ENCODE measurements at regions of chr1 and their contacts with region 1.

Region 1: GRCh38 chr1:215526553-215527151 is 40.5 kb upstream of the KCTD3 start:
- DNase-seq: peak; percentile 16
- ATAC-seq: peak; percentile 70
- H3K4me3 ChIP-seq: no peak overlapping the region
- H3K27ac ChIP-seq: no peak overlapping the region
- H3K4me1 ChIP-seq: peaks cover 4% of the 10 kb centered on the region; the same call in 1 of the 2 replicates
- H3K27me3 ChIP-seq: no peaks in the 10 kb centered on the region
- CTCF ChIP-seq: peak; percentile 44 to 69 (median 58); a peak in 5 of 6 replicates
- EP300 ChIP-seq: no peak
- POLR2A ChIP-seq: no peak
- RAD21 ChIP-seq: peak; percentile 74

Region 2: GRCh38 chr1:214213136-214213535 is 1313.5 kb before region 1 on chr1:
- CTCF ChIA-PET with region 1: interaction called, 4 read pairs
- POLR2A ChIA-PET with region 1: no interaction called
- RAD21 ChIA-PET with region 1: no interaction called
- SMC1A ChIA-PET with region 1: no interaction called
- in situ Hi-C with region 1: loop called (anchors 10 kb)
- intact Hi-C with region 1: loop called (anchors 10 kb)
- DNase-seq: no peak
- ATAC-seq: no peak
- H3K4me3 ChIP-seq: no peak overlapping the region
- H3K27ac ChIP-seq: no peak overlapping the region
- H3K4me1 ChIP-seq: no peaks in the 10 kb centered on the region
- H3K27me3 ChIP-seq: no peaks in the 10 kb centered on the region; a peak in 1 of 4 replicates
- CTCF ChIP-seq: no peak
- EP300 ChIP-seq: no peak
- POLR2A ChIP-seq: no peak
- RAD21 ChIP-seq: no peak

Region 3: GRCh38 chr1:214632091-214632490 is 894.6 kb before region 1 on chr1:
- CTCF ChIA-PET with region 1: interaction called, 5 read pairs
- POLR2A ChIA-PET with region 1: no interaction called
- RAD21 ChIA-PET with region 1: interaction called, 4 read pairs
- SMC1A ChIA-PET with region 1: interaction called, 11 read pairs
- in situ Hi-C with region 1: loop called (anchors 10 kb)
- intact Hi-C with region 1: loop called (anchors 5 kb)
- DNase-seq: no peak
- ATAC-seq: peak; percentile 38; the same call in 2 of the 3 replicates
- H3K4me3 ChIP-seq: no peak overlapping the region
- H3K27ac ChIP-seq: no peak overlapping the region
- H3K4me1 ChIP-seq: no peaks in the 10 kb centered on the region
- H3K27me3 ChIP-seq: no peaks in the 10 kb centered on the region
- CTCF ChIP-seq: no peak
- EP300 ChIP-seq: no peak
- POLR2A ChIP-seq: no peak
- RAD21 ChIP-seq: no peak

Region 4: DNA sequence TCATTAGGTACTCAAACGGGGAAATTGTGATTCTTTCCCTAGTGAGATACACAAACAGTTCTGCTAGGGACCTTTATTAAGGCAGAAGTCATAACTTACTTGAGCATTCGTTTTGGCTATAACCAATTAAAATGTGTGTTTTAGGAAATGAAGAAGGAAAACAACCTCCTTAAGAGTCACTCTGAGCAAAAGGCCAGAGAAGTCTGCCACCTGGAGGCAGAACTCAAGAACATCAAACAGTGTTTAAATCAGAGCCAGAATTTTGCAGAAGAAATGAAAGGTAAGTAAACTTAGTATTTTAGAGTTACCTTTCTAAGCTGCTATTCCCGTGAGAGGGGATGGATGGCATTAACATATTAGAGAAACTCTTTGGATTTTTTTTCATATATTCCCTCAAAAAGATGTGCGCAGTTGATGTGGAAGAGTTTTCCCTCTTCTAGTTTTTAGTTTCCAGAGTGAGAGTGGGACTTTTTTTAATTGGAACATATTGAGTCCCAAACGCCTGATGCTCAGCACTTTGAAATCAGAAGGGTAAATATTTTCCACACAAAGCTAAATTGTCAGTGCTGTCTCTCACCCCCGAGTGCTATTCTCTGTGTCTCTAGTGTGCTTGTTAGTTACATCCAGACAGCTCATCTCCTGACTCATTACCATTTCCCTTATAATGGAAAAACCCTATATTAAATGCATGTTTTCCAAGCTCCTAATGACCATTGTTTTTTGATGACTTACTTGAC is 888.8 kb before region 1 on chr1:
- CTCF ChIA-PET with region 1: interaction called, 3 read pairs
- POLR2A ChIA-PET with region 1: no interaction called
- RAD21 ChIA-PET with region 1: no interaction called
- SMC1A ChIA-PET with region 1: interaction called, 4 read pairs
- in situ Hi-C with region 1: loop called (anchors 10 kb)
- intact Hi-C with region 1: no loop called
- DNase-seq: no peak
- ATAC-seq: peak; percentile 72
- H3K4me3 ChIP-seq: no peak overlapping the region
- H3K27ac ChIP-seq: no peak overlapping the region
- H3K4me1 ChIP-seq: no peaks in the 10 kb centered on the region
- H3K27me3 ChIP-seq: no peaks in the 10 kb centered on the region
- CTCF ChIP-seq: peak; percentile 52 to 63 (median 56)
- EP300 ChIP-seq: no peak
- POLR2A ChIP-seq: no peak
- RAD21 ChIP-seq: peak; percentile 57

Region 5: GRCh38 chr1:214823311-214824117 is 703.1 kb before region 1 on chr1:
- CTCF ChIA-PET with region 1: interaction called, 11 read pairs
- POLR2A ChIA-PET with region 1: no interaction called
- RAD21 ChIA-PET with region 1: interaction called, 4 read pairs
- SMC1A ChIA-PET with region 1: interaction called, 3 read pairs
- in situ Hi-C with region 1: loop called (anchors 25 kb)
- intact Hi-C with region 1: loop called (anchors 5 kb)
- DNase-seq: no peak
- ATAC-seq: peak; percentile 31; the same call in 1 of the 3 replicates
- H3K4me3 ChIP-seq: no peak overlapping the region
- H3K27ac ChIP-seq: no peak overlapping the region
- H3K4me1 ChIP-seq: no peaks in the 10 kb centered on the region
- H3K27me3 ChIP-seq: no peaks in the 10 kb centered on the region
- CTCF ChIP-seq: peak in 2 of 3 experiments; percentile 15 to 16; a peak in 2 of 6 replicates
- EP300 ChIP-seq: no peak
- POLR2A ChIP-seq: no peak
- RAD21 ChIP-seq: 0 out of 2 replicates have a peak, but pooled peaks have one; percentile 6

Region 6: DNA sequence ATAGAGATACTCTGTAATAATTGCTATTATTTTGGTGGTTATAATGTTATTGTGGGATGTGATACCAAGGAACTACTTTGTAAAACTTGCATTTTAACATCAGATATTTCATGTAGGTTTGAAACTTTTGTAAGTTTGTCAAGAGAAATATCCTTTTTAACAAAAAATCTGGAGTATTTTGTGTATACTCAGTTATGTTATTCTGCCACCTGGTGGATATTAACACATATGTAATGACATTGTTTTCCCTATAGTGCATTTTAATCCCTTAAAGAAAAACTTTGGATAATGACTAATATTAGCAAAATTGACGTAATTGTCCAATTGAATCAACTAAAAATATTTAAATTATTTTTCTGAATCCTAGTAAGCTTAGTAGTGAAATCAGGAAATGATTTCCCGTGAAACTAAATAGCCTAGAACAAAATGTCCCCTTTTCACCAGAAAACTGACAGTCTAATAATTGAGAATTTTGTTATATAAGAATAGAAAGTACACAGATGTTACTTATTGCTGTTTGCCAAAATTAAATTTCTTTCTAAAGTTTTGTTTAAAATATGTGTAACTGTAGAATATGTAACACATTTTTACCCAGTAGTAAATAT is 80.0 kb after region 1 on chr1:
- CTCF ChIA-PET with region 1: interaction called, 5 read pairs
- POLR2A ChIA-PET with region 1: no interaction called
- RAD21 ChIA-PET with region 1: interaction called, 5 read pairs
- SMC1A ChIA-PET with region 1: interaction called, 5 read pairs
- in situ Hi-C with region 1: no loop called
- intact Hi-C with region 1: loop called (anchors 2 kb)
- DNase-seq: no peak
- ATAC-seq: peak; percentile 62
- H3K4me3 ChIP-seq: no peak overlapping the region
- H3K27ac ChIP-seq: no peak overlapping the region
- H3K4me1 ChIP-seq: no peaks in the 10 kb centered on the region
- H3K27me3 ChIP-seq: no peaks in the 10 kb centered on the region
- CTCF ChIP-seq: peak in 2 of 3 experiments; percentile 9 to 36; a peak in 3 of 6 replicates
- EP300 ChIP-seq: no peak
- POLR2A ChIP-seq: no peak
- RAD21 ChIP-seq: peak; percentile 40

Measured in GM12878 (cell line).